ENCODE measurements at regions of chr3 and their contacts with region 1.

Region 1: DNA sequence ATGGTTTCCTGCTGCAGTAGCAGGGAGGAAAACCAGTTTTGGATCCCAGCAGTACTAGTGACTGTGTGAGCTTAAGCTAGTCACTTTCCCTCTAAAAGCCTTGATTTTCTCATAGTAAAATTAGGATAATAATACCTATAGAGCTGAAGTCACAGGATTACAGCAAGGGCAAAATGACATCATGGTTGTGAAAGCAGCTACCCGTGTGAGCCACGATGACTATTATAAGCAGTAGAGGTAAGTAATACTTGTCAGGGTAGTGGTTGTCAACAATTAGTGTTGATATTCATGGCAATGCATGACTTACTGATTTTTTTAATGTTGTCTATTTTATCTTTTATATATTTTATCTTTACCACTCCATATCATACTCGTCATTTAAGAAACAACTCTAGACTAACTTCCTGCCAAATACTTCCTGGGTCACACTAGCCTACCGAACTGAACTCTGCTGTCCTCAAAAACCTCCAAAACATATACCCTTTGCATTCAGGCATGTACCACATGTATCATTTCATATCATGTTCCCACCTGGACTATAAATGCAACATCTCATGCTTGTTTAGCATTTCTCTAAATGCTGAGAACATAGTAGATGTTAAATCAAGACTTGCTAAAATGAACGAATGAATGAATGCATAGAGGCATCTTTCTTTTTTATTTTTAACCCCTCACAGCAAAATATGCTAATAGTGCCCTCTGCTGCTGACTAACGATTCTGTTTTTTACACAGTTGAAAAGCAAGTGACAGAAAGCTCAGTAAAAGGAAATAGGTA is 172.6 kb downstream of the P3H2 start:
- DNase-seq: no peak

Region 2: DNA sequence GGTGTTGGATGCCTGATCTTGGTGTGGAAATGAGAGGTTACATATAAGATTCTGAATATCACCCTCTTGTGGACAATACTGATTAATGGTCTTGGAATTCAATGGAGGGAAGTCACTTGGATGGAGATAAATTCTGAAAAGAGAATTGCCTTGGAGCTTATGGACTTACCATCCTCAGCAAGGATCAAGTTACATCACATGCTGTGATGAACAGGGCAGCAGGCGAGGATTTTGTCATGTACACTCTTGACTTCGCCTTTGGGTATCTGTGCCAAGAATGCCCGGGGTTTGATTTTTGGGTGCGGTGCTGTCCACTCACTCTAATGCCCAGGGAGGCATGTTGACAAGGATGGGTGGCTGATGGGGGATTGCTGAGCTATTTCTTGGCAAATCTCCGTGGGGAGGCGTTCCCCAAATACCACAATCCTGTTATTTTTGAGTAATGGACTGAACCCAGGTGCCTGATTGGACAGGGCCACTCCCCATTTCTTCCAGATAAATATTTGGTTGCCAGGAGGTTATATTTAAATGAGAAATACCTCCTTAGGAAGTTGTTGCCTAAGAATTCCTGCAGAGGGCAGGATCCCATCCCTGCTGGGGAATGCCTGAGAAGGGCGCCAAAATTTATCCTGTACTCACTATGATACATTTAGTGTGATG is 680.1 kb before region 1 on chr3:
- intact Hi-C with region 1: loop called (anchors 10 kb)
- DNase-seq: peak in 1 of 10 donors; percentile 43

Region 3: DNA sequence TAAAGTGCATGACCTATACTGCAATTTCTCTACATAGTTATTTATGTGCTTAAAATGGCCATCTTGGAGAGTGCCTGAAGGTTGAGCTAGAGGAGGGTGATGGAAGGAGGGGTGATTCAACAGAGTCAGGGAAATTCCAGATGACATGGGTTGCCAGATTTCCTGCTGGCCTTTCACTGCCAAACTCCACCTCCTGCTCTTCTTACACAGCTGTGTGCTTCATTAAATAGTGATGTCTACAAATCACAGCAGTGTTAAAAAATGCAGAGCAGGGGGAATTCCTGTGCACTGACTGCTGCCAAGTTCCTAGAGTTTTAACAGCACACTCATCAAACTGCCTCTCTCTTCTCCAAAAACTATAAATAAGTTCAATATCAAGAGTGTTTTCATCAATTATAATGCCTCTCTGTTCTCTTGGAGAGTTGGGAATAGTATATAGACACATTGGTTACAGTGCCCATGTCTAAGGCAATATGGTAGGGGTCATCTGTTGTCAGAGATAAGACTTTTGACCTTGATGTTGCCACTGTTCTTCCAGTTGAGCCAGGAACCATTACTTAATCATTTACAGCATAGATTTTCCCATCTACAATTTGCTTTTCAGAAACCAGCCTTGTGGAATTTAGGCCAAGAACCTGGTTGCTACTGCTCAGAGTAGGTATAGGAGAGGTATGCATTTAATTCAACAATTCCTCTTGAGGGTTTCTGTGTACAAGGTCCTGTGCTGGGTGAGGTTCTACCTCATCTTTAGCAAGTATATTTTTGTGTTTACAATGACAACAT is 237.3 kb before region 1 on chr3:
- intact Hi-C with region 1: no loop called
- DNase-seq: no peak

Region 4: DNA sequence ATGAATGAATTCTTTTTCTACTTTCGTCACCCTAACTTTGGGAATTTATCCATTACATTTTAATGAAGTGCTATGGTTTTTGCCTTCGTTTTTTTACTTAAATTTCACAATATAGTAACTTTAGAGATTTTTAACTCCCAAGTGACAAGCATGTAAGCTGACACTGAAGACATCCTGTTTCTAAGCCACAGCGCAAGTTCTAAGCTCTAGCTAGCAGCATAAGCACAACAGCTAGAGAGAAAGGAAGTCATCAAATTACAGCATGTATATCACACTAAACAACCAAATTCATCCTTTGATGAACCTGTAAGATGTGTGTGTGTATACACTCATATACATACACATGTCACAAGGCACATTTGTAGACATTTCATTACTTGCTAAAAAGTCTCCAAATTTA is 53.3 kb after region 1 on chr3:
- intact Hi-C with region 1: no loop called
- DNase-seq: no peak

Region 5: DNA sequence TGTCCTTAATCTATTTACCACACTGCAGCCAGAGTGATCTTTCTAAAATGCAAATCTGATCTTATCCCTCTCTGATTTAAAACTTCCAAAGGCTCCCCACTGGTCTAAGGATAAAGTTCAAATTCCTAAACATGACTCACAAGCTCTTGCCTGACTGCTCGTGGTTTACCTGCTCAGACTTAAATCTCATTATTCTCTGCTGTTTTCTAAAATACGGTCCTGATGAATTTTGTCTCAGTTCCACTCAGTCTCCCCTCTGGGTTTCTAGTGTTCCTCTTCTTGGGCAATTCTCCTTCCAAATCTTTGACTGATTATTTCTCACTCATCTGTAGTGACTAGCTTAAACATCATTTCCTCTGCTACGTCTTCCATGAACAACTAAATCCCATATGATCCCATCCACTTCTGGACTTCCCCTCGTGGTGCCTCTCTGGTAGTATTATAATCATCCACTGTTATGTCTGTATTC is 64.2 kb after region 1 on chr3:
- intact Hi-C with region 1: no loop called
- DNase-seq: no peak

Measured in posterior cingulate gyrus (tissue), 11 donors.